ENCODE measurements at regions of chr5 and their contacts with region 1.

Region 1: DNA sequence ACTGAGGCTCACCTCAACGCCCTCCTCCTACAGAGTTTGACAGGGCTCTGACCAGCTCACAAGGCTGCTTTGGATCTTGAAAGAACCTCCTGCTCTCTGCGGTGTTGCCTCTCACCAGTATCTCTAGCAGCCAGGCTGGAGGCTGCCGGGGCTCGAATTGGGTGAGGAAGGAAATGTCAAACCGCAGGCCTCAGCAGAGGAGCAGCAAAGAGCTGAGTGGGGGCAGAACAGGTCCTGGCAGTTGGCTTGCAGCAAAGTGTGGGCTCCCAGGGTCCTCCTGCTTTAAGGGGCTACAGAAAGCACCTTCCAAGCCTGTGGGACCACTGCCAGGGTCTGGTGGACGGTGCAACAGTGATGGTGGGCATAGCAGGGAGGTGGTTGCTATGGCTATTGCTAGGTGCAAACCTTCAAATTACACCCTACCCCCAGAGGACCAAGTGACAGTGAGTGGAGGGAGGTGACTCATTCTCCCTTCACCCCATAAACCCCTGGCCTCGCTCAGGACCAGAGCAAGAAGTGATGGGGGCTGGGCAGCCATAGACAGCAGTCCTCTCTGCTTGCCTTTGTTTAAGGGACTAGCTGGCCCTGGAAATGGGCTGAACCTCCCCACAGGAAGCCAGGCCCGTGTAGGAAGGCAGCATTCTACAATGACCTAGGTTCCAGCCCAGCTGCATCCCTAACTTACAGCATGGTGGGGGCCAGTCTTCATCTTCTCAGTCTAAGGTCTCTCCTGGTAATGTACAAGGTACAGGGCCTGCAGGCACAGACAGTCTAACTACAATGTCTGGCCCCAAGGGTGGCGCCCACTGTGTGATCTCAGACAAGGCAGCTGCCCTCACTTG is 18.7 kb downstream of the LCP2 start:
- DNase-seq: peak; percentile 66 to 93 (median 90)
- ATAC-seq: peak; percentile 84
- H3K4me3 ChIP-seq: peak overlapping the region; percentile 33
- H3K4me3 Mint-ChIP-seq: peak overlapping the region; percentile 68 to 100 (median 86)
- H3K27ac ChIP-seq: peak overlapping the region; percentile 75
- H3K27ac Mint-ChIP-seq: peak overlapping the region; percentile 93 to 98 (median 95)
- H3K4me1 ChIP-seq: peaks cover 92 to 94% of the 10 kb centered on the region in 2 donors
- H3K4me1 Mint-ChIP-seq: peaks cover 72 to 100% (median 96%) of the 10 kb centered on the region in 7 donors
- H3K27me3 ChIP-seq: no peaks in the 10 kb centered on the region
- H3K27me3 Mint-ChIP-seq: peaks cover 0 to 2% (median 0%) of the 10 kb centered on the region in 5 donors

Region 2: GRCh38 chr5:170225326-170226128 is 53.3 kb before region 1 on chr5:
- CTCF ChIA-PET with region 1: interaction called, 40 read pairs
- POLR2A ChIA-PET with region 1: interaction called, 13 read pairs
- intact Hi-C with region 1: loop called (anchors 1 to 2 kb)
- DNase-seq: peak; percentile 45 to 78 (median 69)
- ATAC-seq: peak; percentile 75
- H3K4me3 ChIP-seq: no peak overlapping the region
- H3K4me3 Mint-ChIP-seq: peak overlapping the region in 1 of 10 donors; percentile 15
- H3K27ac ChIP-seq: no peak overlapping the region
- H3K27ac Mint-ChIP-seq: peak overlapping the region in 3 of 9 donors; percentile 31 to 75 (median 61)
- H3K4me1 ChIP-seq: no peaks in the 10 kb centered on the region
- H3K4me1 Mint-ChIP-seq: peaks cover 0 to 11% (median 5%) of the 10 kb centered on the region in 7 donors
- H3K27me3 ChIP-seq: no peaks in the 10 kb centered on the region
- H3K27me3 Mint-ChIP-seq: no peaks in the 10 kb centered on the region

Region 3: GRCh38 chr5:170267431-170268152 is 11.2 kb before region 1 on chr5:
- CTCF ChIA-PET with region 1: interaction called, 70 read pairs
- POLR2A ChIA-PET with region 1: interaction called, 54 read pairs
- intact Hi-C with region 1: loop called (anchors 1 kb)
- DNase-seq: peak; percentile 62 to 82 (median 77)
- ATAC-seq: peak; percentile 75
- H3K4me3 ChIP-seq: no peak overlapping the region
- H3K4me3 Mint-ChIP-seq: peak overlapping the region; percentile 63 to 81 (median 73)
- H3K27ac ChIP-seq: peak overlapping the region; percentile 66
- H3K27ac Mint-ChIP-seq: peak overlapping the region; percentile 81 to 98 (median 93)
- H3K4me1 ChIP-seq: peaks cover 69 to 75% of the 10 kb centered on the region in 2 donors
- H3K4me1 Mint-ChIP-seq: peaks cover 62 to 100% (median 94%) of the 10 kb centered on the region in 7 donors
- H3K27me3 ChIP-seq: no peaks in the 10 kb centered on the region
- H3K27me3 Mint-ChIP-seq: no peaks in the 10 kb centered on the region

Region 4: GRCh38 chr5:170302653-170303501 is 24.0 kb after region 1 on chr5:
- CTCF ChIA-PET with region 1: interaction called, 430 read pairs
- POLR2A ChIA-PET with region 1: interaction called, 1,119 read pairs
- intact Hi-C with region 1: loop called in 1 of 2 experiments (anchors 1 kb)
- DNase-seq: peak; percentile 44 to 92 (median 84)
- ATAC-seq: peak; percentile 86
- H3K4me3 ChIP-seq: peak overlapping the region; percentile 54
- H3K4me3 Mint-ChIP-seq: peak overlapping the region; percentile 85 to 99 (median 92)
- H3K27ac ChIP-seq: peak overlapping the region; percentile 79
- H3K27ac Mint-ChIP-seq: peak overlapping the region; percentile 74 to 99 (median 96)
- H3K4me1 ChIP-seq: peaks cover 56 to 61% of the 10 kb centered on the region in 2 donors
- H3K4me1 Mint-ChIP-seq: peaks cover 56 to 98% (median 87%) of the 10 kb centered on the region in 7 donors
- H3K27me3 ChIP-seq: no peaks in the 10 kb centered on the region
- H3K27me3 Mint-ChIP-seq: no peaks in the 10 kb centered on the region

Region 5: GRCh38 chr5:170333161-170333910 is 54.5 kb after region 1 on chr5:
- CTCF ChIA-PET with region 1: interaction called, 278 read pairs
- POLR2A ChIA-PET with region 1: interaction called, 391 read pairs
- intact Hi-C with region 1: loop called (anchors 1 kb)
- DNase-seq: peak in 6 of 9 donors; percentile 36 to 61 (median 50)
- ATAC-seq: peak; percentile 36
- H3K4me3 ChIP-seq: peak overlapping the region; percentile 40
- H3K4me3 Mint-ChIP-seq: peak overlapping the region in 4 of 10 donors; percentile 77 to 82 (median 81)
- H3K27ac ChIP-seq: peak overlapping the region; percentile 87
- H3K27ac Mint-ChIP-seq: no peak overlapping the region
- H3K4me1 ChIP-seq: peaks cover 79 to 87% of the 10 kb centered on the region in 2 donors
- H3K4me1 Mint-ChIP-seq: peaks cover 0 to 65% (median 30%) of the 10 kb centered on the region in 7 donors
- H3K27me3 ChIP-seq: no peaks in the 10 kb centered on the region
- H3K27me3 Mint-ChIP-seq: peaks cover 0 to 3% (median 0%) of the 10 kb centered on the region in 5 donors

Region 6: GRCh38 chr5:170357955-170358444 is 79.2 kb after region 1 on chr5:
- CTCF ChIA-PET with region 1: no interaction called
- POLR2A ChIA-PET with region 1: no interaction called
- intact Hi-C with region 1: no loop called
- DNase-seq: no peak
- ATAC-seq: peak; percentile 81
- H3K4me3 ChIP-seq: no peak overlapping the region
- H3K4me3 Mint-ChIP-seq: no peak overlapping the region
- H3K27ac ChIP-seq: no peak overlapping the region
- H3K27ac Mint-ChIP-seq: peak overlapping the region in 1 of 9 donors; percentile 27
- H3K4me1 ChIP-seq: no peaks in the 10 kb centered on the region
- H3K4me1 Mint-ChIP-seq: peaks cover 0 to 18% (median 5%) of the 10 kb centered on the region in 7 donors
- H3K27me3 ChIP-seq: no peaks in the 10 kb centered on the region
- H3K27me3 Mint-ChIP-seq: peaks cover 0 to 31% (median 12%) of the 10 kb centered on the region in 5 donors

Region 7: GRCh38 chr5:170681013-170681433 is 402.2 kb after region 1 on chr5:
- CTCF ChIA-PET with region 1: no interaction called
- POLR2A ChIA-PET with region 1: no interaction called
- intact Hi-C with region 1: loop called in 1 of 2 experiments (anchors 5 kb)
- DNase-seq: peak in 6 of 9 donors; percentile 4 to 74 (median 6)
- ATAC-seq: peak; percentile 73
- H3K4me3 ChIP-seq: no peak overlapping the region
- H3K4me3 Mint-ChIP-seq: peak overlapping the region in 3 of 10 donors; percentile 6 to 58 (median 9)
- H3K27ac ChIP-seq: no peak overlapping the region
- H3K27ac Mint-ChIP-seq: no peak overlapping the region
- H3K4me1 ChIP-seq: no peaks in the 10 kb centered on the region
- H3K4me1 Mint-ChIP-seq: peaks cover 1 to 13% (median 9%) of the 10 kb centered on the region in 7 donors
- H3K27me3 ChIP-seq: no peaks in the 10 kb centered on the region
- H3K27me3 Mint-ChIP-seq: peaks cover 51 to 68% (median 65%) of the 10 kb centered on the region in 5 donors

Measured in naive thymus-derived CD4-positive, alpha-beta T cell (primary cell).